ENCODE measurements at regions of chr12 and their contacts with region 1.

Region 1: DNA sequence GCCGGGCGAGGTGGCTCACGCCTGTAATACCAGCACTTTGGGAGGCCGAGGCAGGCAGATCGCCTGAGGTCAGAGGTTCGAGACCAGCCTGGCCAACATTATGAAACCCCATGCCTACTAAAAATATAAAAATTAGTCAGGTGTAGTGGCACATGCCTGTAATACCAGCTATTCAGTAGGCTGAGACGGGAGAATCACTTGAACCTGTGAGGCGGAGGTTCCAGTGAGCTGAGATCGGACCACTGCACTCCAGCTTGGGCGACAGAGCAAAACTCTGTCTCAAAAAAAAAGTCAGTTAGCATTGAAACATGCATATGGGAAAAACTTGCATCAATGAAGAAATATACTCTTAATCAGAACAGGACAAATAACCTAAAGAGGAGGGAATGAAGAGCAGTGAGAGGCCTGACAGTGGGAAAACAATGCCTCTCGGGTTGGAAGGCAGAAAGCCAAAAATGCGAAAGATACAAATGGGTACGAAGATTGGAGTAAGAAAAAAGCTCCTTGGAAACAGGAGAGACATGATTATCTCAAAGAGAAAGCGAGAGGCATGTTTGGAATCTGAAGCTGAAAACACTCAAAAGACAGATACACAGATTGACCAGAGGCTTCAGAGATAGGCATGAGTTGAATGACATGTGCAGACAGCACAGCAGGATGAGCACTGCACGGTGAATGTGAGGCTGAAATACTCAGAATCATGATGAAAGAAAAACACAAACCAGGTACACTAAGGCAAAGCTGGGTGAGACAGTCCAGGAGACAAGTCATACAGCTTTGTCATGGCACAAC is 30.6 kb downstream of the RESF1 start:
- DNase-seq: peak; percentile 94
- H3K4me3 ChIP-seq: no peak overlapping the region
- H3K27ac ChIP-seq: peak overlapping the region; percentile 72
- H3K4me1 ChIP-seq: peaks cover 21% of the 10 kb centered on the region
- H3K27me3 ChIP-seq: no peaks in the 10 kb centered on the region
- CTCF ChIP-seq: no peak

Region 2: GRCh38 chr12:31728917-31729640 is 260.7 kb before region 1 on chr12 and contains the start of gene AMN1:
- CTCF ChIA-PET with region 1: no interaction called
- dilution Hi-C with region 1: no loop called
- in situ Hi-C with region 1: no loop called
- intact Hi-C with region 1: loop called (anchors 1 kb)
- DNase-seq: peak; percentile 100
- H3K4me3 ChIP-seq: peak within 1 kb of the TSS; percentile 60 to 71 (median 62)
- H3K27ac ChIP-seq: peak within 1 kb of the TSS; percentile 82
- H3K4me1 ChIP-seq: peaks cover 20% of the 10 kb centered on the region
- H3K27me3 ChIP-seq: no peaks in the 10 kb centered on the region
- CTCF ChIP-seq: no peak
- total RNA-seq, gene AMN1: 5.0 to 5.7 TPM

Region 3: DNA sequence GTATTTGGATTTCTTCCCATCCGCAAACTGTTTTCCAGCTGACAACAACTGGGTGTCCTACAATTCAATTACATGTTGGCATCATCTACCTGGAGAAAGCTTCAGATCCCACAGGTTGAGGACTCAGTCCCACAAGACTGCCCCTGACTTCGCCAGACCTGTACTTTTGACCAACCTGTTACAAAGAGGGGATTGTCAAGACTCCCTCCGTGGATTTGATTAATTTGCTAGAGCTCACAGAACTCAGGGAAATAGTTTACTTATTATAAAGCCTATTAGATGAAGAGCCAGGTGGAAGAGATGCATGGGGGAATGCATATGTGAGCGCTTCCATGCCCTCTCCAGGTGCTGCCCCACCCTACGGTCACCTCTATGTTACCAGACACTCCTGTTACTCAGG is 15.9 kb before region 1 on chr12:
- CTCF ChIA-PET with region 1: interaction called, 19 read pairs
- dilution Hi-C with region 1: no loop called
- in situ Hi-C with region 1: no loop called
- intact Hi-C with region 1: no loop called
- DNase-seq: no peak
- H3K4me3 ChIP-seq: no peak overlapping the region
- H3K27ac ChIP-seq: no peak overlapping the region
- H3K4me1 ChIP-seq: no peaks in the 10 kb centered on the region
- H3K27me3 ChIP-seq: no peaks in the 10 kb centered on the region
- CTCF ChIP-seq: no peak

Region 4: DNA sequence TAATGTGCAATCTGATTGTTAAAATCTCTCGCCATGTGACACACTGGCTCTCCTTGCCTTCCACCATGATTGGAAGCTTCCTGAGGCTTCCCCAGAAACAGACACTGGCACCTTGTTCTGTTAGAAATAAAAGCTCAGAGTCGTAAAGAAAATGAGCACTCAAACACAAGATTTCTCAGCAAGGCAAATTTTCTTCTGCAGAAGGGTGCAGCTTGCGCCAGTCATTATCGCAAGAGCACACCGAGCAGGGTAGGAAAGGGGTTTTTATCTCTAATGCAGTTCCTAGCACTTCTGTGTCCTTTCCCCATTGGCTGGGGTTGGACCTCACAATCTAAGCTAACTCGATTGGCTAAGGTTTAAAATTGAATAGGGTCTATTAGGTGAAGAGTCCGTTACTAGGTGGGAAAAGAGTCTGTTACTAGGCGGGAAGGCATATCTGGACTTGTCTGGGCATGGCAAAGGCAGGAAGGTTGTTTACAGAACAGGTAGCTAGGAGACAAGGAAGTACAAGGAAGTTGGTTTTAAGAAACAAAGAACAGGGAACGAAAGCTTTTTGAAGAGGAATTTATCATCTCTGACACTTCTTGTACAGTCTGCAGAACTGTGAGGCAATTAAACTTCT is 54.3 kb after region 1 on chr12:
- CTCF ChIA-PET with region 1: no interaction called
- dilution Hi-C with region 1: loop called (anchors 5 kb)
- in situ Hi-C with region 1: no loop called
- intact Hi-C with region 1: no loop called
- DNase-seq: peak; percentile 26
- H3K4me3 ChIP-seq: no peak overlapping the region
- H3K27ac ChIP-seq: no peak overlapping the region
- H3K4me1 ChIP-seq: no peaks in the 10 kb centered on the region
- H3K27me3 ChIP-seq: no peaks in the 10 kb centered on the region
- CTCF ChIP-seq: no peak

Region 5: GRCh38 chr12:32051559-32052414 is 62.0 kb after region 1 on chr12:
- CTCF ChIA-PET with region 1: no interaction called
- dilution Hi-C with region 1: no loop called
- in situ Hi-C with region 1: no loop called
- intact Hi-C with region 1: loop called (anchors 1 kb)
- DNase-seq: peak; percentile 99
- H3K4me3 ChIP-seq: no peak overlapping the region
- H3K27ac ChIP-seq: peak overlapping the region; percentile 81
- H3K4me1 ChIP-seq: peaks cover 18% of the 10 kb centered on the region
- H3K27me3 ChIP-seq: no peaks in the 10 kb centered on the region
- CTCF ChIP-seq: no peak

Region 6: DNA sequence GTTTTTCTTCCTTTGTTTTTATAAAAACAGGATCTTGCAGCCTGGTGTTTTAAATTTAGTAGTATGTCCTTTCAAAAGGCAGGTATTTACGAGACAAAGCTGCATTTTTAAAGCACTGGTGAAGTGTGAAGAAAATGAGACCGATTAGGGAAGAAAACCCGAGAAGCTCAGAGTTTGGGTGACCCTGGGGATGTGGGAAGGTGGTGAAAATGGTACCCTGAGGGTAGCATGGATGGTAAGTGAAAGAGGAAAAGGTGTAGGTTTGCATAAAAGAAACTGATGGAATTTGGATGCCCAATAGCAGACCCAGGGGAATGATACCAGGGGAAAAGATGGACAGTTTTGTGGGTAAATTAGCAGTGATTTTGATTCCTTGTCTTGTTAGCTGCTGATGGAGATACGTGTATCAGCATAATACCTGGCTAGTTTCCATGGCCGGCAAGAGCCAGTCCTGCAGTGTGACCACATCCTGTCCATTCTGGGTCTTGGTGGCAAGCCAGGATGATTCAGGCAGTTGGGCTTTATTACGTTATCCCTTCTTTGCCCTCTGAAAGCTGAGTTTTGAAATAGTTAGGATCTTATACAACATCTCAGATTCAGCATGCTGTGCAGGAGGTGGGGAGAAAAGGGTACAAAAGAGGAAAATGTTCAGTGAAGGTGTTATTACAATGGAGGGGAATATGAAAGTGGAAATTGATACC is 125.8 kb after region 1 on chr12:
- CTCF ChIA-PET with region 1: no interaction called
- dilution Hi-C with region 1: no loop called
- in situ Hi-C with region 1: no loop called
- intact Hi-C with region 1: no loop called
- DNase-seq: peak; percentile 97
- H3K4me3 ChIP-seq: peak overlapping the region in 1 of 3 experiments; percentile 3
- H3K27ac ChIP-seq: peak overlapping the region; percentile 65
- H3K4me1 ChIP-seq: peaks cover 33% of the 10 kb centered on the region
- H3K27me3 ChIP-seq: no peaks in the 10 kb centered on the region
- CTCF ChIP-seq: no peak